Activated T-helper 2 cell treated with anti-CD3 and anti-CD28 coated beads, Interferon-gamma antibody, Interleukin-2, Interleukin-4, amounts not matched to agents 10 μg/mL and 5 μg/mL and 100 μg/mL, durations not matched to agents 14 hours and 24 hours and 36 hours (primary cell): ENCODE measurements at regions of chr13 and their contacts with region 1.

Region 1: GRCh38 chr13:114314074-114314912 is at the start of gene CHAMP1:
- DNase-seq: peak; percentile 91
- H3K4me3 Mint-ChIP-seq: peak within 1 kb of the TSS; percentile 91
- H3K27ac Mint-ChIP-seq: peak within 1 kb of the TSS; percentile 98
- H3K4me1 Mint-ChIP-seq: peaks cover 38% of the 10 kb centered on the region
- H3K27me3 Mint-ChIP-seq: no peaks in the 10 kb centered on the region
- total RNA-seq, gene CHAMP1: 41.7 and 45.6 TPM in 2 replicates

Region 2: DNA sequence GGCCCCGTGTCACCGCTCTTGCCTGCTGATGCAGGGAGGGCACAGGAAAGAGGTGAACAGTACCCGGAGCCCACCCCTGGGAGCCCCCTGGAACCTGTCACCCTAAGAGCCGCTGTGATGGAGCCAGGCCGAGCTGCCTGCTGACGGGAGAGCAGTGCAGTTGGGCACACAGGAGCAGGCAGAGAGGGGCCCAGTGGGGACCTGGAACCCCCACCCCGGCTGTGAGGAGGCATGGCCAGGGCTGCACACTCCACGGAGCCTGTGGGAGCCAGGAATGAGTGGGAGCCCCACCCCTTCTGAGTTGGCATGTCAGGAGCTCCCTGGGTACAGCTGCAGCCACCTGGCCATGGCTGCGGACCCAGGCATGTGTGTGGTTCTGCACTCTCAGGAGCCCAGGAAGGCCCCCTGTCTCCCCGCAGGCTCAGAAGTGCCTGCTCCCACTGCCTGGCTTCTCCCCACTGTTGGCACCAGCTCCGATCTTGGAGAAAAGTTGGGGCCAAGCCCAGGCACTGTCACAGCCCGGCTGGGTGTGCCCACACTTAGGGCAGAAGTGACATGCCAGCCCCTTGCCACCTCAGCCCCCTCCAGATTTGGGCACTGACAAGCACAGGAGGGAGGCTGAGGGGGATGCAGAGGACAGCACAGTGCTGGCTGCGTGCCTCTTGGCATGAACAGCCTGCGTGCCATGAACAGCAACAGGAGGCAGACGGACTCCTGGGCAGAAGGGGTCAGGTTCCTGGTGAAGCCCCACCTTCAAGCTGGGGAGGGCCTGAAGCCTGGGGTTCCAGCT is 128.9 kb before region 1 on chr13:
- intact Hi-C with region 1: no loop called
- DNase-seq: no peak
- H3K4me3 Mint-ChIP-seq: no peak overlapping the region
- H3K27ac Mint-ChIP-seq: no peak overlapping the region
- H3K4me1 Mint-ChIP-seq: peaks cover 1% of the 10 kb centered on the region
- H3K27me3 Mint-ChIP-seq: peaks cover 9% of the 10 kb centered on the region

Region 3: GRCh38 chr13:114281351-114282040 is 32.8 kb before region 1 on chr13 and contains the start of gene UPF3A:
- intact Hi-C with region 1: loop called (anchors 1 kb)
- DNase-seq: peak; percentile 84
- H3K4me3 Mint-ChIP-seq: peak within 1 kb of the TSS; percentile 85
- H3K27ac Mint-ChIP-seq: peak within 1 kb of the TSS; percentile 95
- H3K4me1 Mint-ChIP-seq: peaks cover 35% of the 10 kb centered on the region
- H3K27me3 Mint-ChIP-seq: no peaks in the 10 kb centered on the region
- total RNA-seq, gene UPF3A: 45.9 and 49.9 TPM in 2 replicates

Region 4: DNA sequence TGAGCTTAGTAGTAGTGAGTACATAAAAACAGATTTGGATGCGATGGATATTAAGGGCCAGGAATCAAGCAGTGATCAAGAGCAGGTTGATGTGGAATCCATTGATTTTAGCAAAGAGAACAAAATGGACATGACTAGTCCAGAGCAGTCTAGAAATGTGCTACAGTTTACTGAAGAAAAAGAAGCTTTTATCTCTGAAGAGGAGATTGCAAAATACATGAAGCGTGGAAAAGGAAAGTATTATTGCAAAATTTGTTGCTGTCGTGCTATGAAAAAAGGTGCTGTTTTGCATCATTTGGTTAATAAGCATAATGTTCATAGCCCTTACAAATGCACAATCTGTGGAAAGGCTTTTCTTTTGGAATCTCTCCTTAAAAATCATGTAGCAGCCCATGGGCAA is 11.4 kb after region 1 on chr13:
- intact Hi-C with region 1: no loop called
- DNase-seq: no peak
- H3K4me3 Mint-ChIP-seq: no peak overlapping the region
- H3K27ac Mint-ChIP-seq: peak overlapping the region; percentile 10
- H3K4me1 Mint-ChIP-seq: peaks cover 18% of the 10 kb centered on the region
- H3K27me3 Mint-ChIP-seq: no peaks in the 10 kb centered on the region

Region 5: DNA sequence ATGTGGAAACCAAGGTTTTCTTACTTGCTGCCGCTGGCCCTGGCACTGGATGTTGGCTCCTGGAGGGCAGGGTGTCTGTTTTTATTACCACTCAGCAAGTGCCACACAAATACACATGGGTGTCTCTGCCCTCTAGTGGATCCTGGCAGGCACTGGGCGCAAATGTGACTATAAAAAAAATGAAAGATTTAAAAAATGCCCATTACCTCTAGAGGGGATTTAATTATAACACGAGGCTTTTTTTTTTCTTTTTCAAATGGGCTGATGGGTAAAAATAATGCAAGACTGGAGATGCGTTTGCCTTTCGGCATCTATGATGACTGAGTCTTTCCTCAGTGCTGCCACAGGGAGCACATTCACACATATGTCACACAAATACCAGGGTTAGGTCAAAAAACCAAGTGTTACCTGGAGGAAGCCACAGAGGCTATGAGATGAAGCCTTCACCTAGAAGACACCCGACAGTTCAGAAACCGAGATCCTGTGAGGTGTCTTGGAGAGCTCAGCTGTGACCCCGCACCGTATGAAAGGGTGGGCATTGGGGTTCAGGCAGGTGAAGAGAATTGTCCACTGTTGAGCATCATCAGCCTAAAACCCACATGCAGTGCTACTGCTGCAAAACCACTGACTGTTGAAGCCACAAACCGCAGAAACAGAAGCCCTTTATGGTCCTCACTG is 25.7 kb after region 1 on chr13:
- intact Hi-C with region 1: loop called (anchors 1 kb)
- DNase-seq: no peak
- H3K4me3 Mint-ChIP-seq: no peak overlapping the region
- H3K27ac Mint-ChIP-seq: no peak overlapping the region
- H3K4me1 Mint-ChIP-seq: peaks cover 19% of the 10 kb centered on the region
- H3K27me3 Mint-ChIP-seq: peaks cover 15% of the 10 kb centered on the region